HCT116 (cell line): ENCODE measurements at regions of chr1 and their contacts with region 1.

Region 1: DNA sequence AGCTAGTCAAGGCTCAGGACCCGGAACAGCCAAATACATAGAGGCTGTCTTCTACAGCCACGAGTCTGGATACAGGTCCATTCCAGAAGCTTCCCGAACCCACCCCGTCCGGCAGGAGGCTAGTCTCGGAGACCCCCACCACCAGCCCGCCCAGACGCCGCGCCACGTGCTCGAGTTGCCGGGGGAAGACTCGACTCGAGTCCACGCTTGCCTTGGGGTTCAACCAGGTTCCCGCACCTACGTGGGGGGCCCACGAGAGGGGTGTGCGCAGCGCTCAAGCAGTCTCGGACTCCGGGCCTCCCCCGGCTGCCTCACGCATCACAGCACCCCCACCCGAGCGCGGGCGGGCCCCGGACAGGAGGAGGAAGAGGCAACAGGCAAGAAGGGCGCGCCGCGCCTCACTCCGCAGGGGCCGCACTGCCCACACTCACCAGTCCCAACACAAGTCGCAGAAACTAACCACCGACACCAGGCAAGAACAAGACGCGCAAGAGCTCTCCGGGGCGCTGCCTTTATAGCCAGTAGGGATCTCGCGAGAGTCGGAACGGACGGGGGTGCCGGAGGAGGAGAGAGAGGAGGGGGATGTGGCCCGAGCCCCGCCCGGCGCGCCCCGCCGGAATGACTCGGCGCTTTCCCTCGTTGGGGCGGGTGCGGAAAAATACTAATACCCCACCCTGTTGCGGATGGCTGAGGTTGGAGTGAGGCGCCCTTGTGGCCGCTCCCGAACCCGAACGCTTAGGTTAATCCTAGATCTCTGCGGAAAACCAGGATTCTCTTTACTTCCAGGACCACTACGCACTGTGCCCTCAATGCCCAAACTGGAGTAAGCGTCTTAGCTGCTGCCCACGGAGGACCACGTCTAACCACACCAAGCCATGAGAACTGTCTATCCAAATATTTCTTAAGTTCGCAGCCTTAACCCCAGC is at the start of gene PRDX1:
- DNase-seq: peak; percentile 92
- ATAC-seq: peak; percentile 83
- H3K4me3 ChIP-seq: peak within 1 kb of the TSS; percentile 96 to 100
- H3K27ac ChIP-seq: peak within 1 kb of the TSS; percentile 89
- H3K4me1 ChIP-seq: peaks cover 13 to 40% of the 10 kb centered on the region in 2 experiments; a peak in 3 of 4 replicates
- H3K27me3 ChIP-seq: no peaks in the 10 kb centered on the region
- CTCF ChIP-seq: peak in 1 of 3 experiments; percentile 8; a peak in 1 of 6 replicates
- POLR2A ChIP-seq: peak; percentile 100
- RAD21 ChIP-seq: no peak
- total RNA-seq, gene PRDX1: 1,171 TPM

Region 2: DNA sequence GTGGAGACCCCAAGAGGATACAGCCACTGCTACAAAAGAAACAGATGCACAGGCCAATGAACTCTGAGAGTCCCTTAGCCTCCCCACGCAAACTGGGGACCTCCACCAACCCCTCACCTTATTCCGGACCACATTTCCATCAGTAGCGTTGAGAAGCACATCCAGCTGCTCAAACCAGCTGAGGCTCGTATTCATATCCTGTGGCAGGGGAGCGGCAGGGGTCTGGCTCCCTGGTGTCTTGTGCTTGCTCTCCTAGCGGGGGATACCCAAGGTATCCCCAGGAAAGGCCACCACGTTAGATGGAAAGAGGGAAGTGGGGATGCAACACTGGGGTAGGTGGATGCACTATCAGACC is 22.3 kb before region 1 on chr1:
- CTCF ChIA-PET with region 1: no interaction called
- POLR2A ChIA-PET with region 1: interaction called, 44 read pairs
- RAD21 ChIA-PET with region 1: interaction called in 1 of 2 experiments, 3 read pairs
- intact Hi-C with region 1: no loop called
- DNase-seq: no peak
- ATAC-seq: no peak; the same call in 1 of the 2 replicates
- H3K4me3 ChIP-seq: peak overlapping the region; percentile 68 to 92
- H3K27ac ChIP-seq: peak overlapping the region; percentile 36
- H3K4me1 ChIP-seq: peaks cover 2 to 18% of the 10 kb centered on the region in 2 experiments; a peak in 3 of 4 replicates
- H3K27me3 ChIP-seq: no peaks in the 10 kb centered on the region
- CTCF ChIP-seq: no peak
- POLR2A ChIP-seq: peak; percentile 3
- RAD21 ChIP-seq: no peak

Region 3: GRCh38 chr1:45535988-45536766 is 14.5 kb after region 1 on chr1:
- CTCF ChIA-PET with region 1: no interaction called
- POLR2A ChIA-PET with region 1: interaction called, 13 read pairs
- RAD21 ChIA-PET with region 1: no interaction called
- intact Hi-C with region 1: no loop called
- DNase-seq: no peak
- ATAC-seq: 0 out of 2 replicates have a peak, but pooled peaks have one; percentile 27
- H3K4me3 ChIP-seq: no peak overlapping the region
- H3K27ac ChIP-seq: no peak overlapping the region
- H3K4me1 ChIP-seq: no peaks in the 10 kb centered on the region
- H3K27me3 ChIP-seq: no peaks in the 10 kb centered on the region
- CTCF ChIP-seq: no peak
- POLR2A ChIP-seq: no peak
- RAD21 ChIP-seq: no peak

Region 4: GRCh38 chr1:45543581-45544417 is 22.1 kb after region 1 on chr1:
- CTCF ChIA-PET with region 1: no interaction called
- POLR2A ChIA-PET with region 1: interaction called, 19 read pairs
- RAD21 ChIA-PET with region 1: no interaction called
- intact Hi-C with region 1: no loop called
- DNase-seq: no peak
- ATAC-seq: no peak
- H3K4me3 ChIP-seq: no peak overlapping the region
- H3K27ac ChIP-seq: no peak overlapping the region
- H3K4me1 ChIP-seq: no peaks in the 10 kb centered on the region
- H3K27me3 ChIP-seq: no peaks in the 10 kb centered on the region
- CTCF ChIP-seq: no peak
- POLR2A ChIP-seq: no peak
- RAD21 ChIP-seq: no peak

Region 5: GRCh38 chr1:45550401-45551351 is 29.0 kb after region 1 on chr1 and contains the start of gene AKR1A1:
- CTCF ChIA-PET with region 1: interaction called, 3 read pairs
- POLR2A ChIA-PET with region 1: interaction called, 20 read pairs
- RAD21 ChIA-PET with region 1: interaction called in 1 of 2 experiments, 4 read pairs
- intact Hi-C with region 1: loop called (anchors 2 kb)
- DNase-seq: peak; percentile 78
- ATAC-seq: peak; percentile 93
- H3K4me3 ChIP-seq: peak within 1 kb of the TSS; percentile 89 to 96
- H3K27ac ChIP-seq: peak within 1 kb of the TSS; percentile 87
- H3K4me1 ChIP-seq: peaks cover 11 to 25% of the 10 kb centered on the region in 2 experiments; a peak in 3 of 4 replicates
- H3K27me3 ChIP-seq: no peaks in the 10 kb centered on the region
- CTCF ChIP-seq: no peak
- POLR2A ChIP-seq: peak; percentile 85
- RAD21 ChIP-seq: no peak
- total RNA-seq, gene AKR1A1: 199 TPM

Region 6: GRCh38 chr1:45686317-45687013 is 164.8 kb after region 1 on chr1 and contains the start of gene GPBP1L1:
- CTCF ChIA-PET with region 1: no interaction called
- POLR2A ChIA-PET with region 1: interaction called, 8 read pairs
- RAD21 ChIA-PET with region 1: no interaction called
- intact Hi-C with region 1: loop called (anchors 10 kb)
- DNase-seq: peak; percentile 91
- ATAC-seq: peak; percentile 76
- H3K4me3 ChIP-seq: peak within 1 kb of the TSS; percentile 56 to 77
- H3K27ac ChIP-seq: peak within 1 kb of the TSS; percentile 94
- H3K4me1 ChIP-seq: peaks cover 3 to 23% of the 10 kb centered on the region in 2 experiments; a peak in 3 of 4 replicates
- H3K27me3 ChIP-seq: no peaks in the 10 kb centered on the region
- CTCF ChIP-seq: no peak
- POLR2A ChIP-seq: peak; percentile 60
- RAD21 ChIP-seq: no peak
- total RNA-seq, gene GPBP1L1: 110 TPM